Thyroid gland (tissue), 4 donors: ENCODE measurements at regions of chr1 and their contacts with region 1.

Region 1: DNA sequence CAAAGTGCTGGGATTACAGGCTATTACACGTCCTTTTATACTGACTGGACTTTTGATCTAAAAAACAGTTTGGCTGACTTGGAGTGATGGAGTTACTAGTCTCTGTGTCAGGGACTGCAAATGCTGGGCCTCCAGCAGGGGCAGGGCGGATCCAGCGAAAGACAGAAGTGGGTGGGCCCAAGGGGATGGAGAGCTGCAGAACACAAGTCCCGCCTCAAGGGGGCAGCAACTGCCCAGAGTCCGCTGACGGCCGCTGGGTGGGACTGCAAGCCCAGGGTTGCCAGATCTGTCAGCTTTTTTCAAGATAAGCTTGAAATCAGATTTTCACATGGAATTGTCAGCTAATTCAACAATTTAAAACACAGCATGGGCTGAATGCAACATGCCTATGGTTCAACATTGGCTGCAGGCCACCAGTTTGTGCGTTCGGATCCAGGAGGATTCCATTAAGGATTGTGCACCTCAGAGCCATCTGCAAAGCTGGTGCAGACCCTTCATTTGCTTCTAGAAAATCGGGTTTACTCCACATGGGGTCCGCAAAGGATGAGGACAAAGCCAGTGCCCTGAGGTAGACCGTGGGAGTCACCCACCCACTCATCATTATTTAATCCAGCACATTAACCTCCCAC is 10.7 kb downstream of the STMN1 start:
- DNase-seq: peak; percentile 87 to 90
- H3K4me3 ChIP-seq: no peak overlapping the region
- H3K27ac ChIP-seq: no peak overlapping the region
- H3K4me1 ChIP-seq: peaks cover 0 to 3% of the 10 kb centered on the region in 2 donors
- H3K27me3 ChIP-seq: no peaks in the 10 kb centered on the region
- CTCF ChIP-seq: peak; percentile 91 to 99 (median 96)
- POLR2A ChIP-seq: no peak

Region 2: DNA sequence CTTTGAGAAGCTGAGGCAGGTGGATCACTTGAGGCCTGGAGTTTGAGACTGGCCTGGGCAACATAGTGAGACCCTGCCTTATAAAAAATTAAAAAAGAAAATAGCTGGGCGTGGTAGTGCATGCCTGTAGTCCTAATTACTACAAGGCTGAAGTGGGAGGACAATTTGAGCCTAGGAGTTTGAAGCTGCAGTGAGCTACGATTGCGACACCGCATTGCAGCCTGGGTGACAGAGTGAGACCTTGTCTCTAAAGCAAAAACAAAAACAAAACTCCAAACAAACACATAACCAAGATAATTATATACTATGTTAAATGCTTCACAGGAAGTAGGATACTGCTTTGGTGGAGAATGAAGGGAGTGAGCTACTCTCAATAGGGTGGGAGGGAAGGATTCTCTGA is 107.8 kb after region 1 on chr1:
- intact Hi-C with region 1: loop called (anchors 5 kb)
- DNase-seq: no peak
- H3K4me3 ChIP-seq: no peak overlapping the region
- H3K27ac ChIP-seq: no peak overlapping the region
- H3K4me1 ChIP-seq: peaks cover 3 to 14% of the 10 kb centered on the region in 2 donors
- H3K27me3 ChIP-seq: no peaks in the 10 kb centered on the region
- CTCF ChIP-seq: no peak
- POLR2A ChIP-seq: no peak